Colonic mucosa (tissue), 4 donors: ENCODE measurements at regions of chrX and their contacts with region 1.

Region 1: DNA sequence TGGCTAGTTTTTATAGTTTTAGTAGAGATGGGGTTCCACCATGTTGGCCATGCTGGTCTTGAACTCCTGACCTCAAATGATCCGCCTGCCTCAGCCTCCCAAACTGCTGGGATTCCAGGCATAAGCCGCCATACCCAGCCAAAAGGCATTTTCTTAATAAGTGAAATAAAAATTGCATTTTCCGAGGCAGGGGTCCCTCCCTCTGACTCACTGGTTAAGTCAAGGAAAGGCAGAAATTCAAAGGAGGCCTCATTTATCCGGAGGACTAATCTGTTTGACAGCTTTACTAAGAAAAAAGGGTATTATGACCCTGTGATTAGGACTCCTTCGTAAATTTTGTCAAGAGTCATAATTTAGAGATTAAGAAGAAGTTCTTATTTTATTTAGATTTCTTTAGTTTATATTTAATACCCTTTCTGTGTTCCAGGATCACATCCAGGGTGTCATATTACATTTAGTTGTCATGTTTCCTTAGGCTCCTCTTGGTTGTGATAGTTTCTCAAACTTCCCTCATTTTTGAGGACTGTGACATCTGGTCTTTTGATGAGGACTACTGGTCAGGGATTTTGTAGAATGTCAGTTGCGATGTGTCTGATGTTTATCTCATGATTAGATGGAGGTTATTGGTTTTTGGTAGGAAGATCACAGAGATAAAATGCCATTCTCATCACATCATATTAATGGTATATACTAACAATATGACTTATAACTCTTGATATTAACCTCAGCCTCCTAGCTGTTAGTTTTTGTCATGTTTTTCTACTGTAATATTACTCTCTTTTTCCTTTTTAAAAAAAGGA is 753.7 kb upstream of the AMOT start:
- DNase-seq: no peak
- H3K4me3 ChIP-seq: no peak overlapping the region
- H3K27ac ChIP-seq: no peak overlapping the region
- H3K4me1 ChIP-seq: no peaks in the 10 kb centered on the region
- H3K27me3 ChIP-seq: no peaks in the 10 kb centered on the region
- CTCF ChIP-seq: no peak

Region 2: DNA sequence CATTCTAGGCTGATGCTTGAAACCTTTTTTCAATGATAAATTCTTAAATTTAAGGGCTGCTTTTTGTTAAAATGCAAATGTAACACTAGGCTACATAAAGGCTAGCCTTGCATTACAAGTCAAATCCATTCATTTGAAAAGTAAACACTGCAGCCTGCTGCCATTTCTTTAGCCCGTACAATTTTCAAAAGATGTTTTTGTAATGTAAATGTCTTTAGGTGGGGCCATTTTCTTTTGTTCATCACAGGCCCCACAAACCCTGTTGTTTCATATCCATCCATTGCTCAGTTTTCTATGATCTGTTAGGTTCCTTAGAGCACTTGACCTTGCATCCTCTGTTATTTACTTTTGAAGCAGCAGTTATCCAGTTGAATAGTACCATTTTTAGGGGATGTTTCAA is 457.5 kb before region 1 on chrX:
- intact Hi-C with region 1: no loop called
- DNase-seq: no peak
- H3K4me3 ChIP-seq: no peak overlapping the region
- H3K27ac ChIP-seq: no peak overlapping the region
- H3K4me1 ChIP-seq: no peaks in the 10 kb centered on the region
- H3K27me3 ChIP-seq: no peaks in the 10 kb centered on the region
- CTCF ChIP-seq: no peak

Region 3: GRCh38 chrX:113651306-113651705 is 57.0 kb after region 1 on chrX:
- intact Hi-C with region 1: loop called (anchors 10 kb)
- DNase-seq: no peak
- H3K4me3 ChIP-seq: no peak overlapping the region
- H3K27ac ChIP-seq: no peak overlapping the region
- H3K4me1 ChIP-seq: no peaks in the 10 kb centered on the region
- H3K27me3 ChIP-seq: no peaks in the 10 kb centered on the region
- CTCF ChIP-seq: no peak

Region 4: DNA sequence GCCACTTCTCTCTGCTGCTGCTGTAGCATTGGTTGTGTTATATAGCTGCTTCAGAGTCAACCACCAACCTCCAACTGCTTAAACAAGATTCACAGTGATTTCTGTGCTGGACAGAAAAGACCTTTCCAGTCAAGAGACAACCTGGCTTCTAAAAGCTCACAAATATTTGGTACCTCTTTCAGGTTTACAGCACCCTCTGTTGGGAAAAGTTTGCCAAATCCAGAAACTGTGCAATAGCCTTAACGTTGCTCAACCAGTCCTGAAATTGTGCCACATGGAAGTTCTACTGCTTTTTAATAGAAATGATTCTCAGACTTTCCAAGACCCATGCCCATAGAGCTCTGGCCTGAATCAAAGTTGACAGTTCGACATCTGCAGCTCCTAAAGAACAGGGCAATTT is 147.4 kb after region 1 on chrX:
- intact Hi-C with region 1: no loop called
- DNase-seq: no peak
- H3K4me3 ChIP-seq: no peak overlapping the region
- H3K27ac ChIP-seq: no peak overlapping the region
- H3K4me1 ChIP-seq: no peaks in the 10 kb centered on the region
- H3K27me3 ChIP-seq: no peaks in the 10 kb centered on the region
- CTCF ChIP-seq: no peak